Cardiac septum (tissue), 1 donor: ENCODE measurements at regions of chr17 and their contacts with region 1.

Region 1: GRCh38 chr17:72120642-72121163 is at the start of gene SOX9:
- DNase-seq: peak; percentile 93
- total RNA-seq, gene SOX9: 24.0 TPM

Region 2: GRCh38 chr17:71959154-71959553 is 161.5 kb before region 1 on chr17:
- intact Hi-C with region 1: loop called (anchors 5 kb)
- DNase-seq: no peak

Region 3: DNA sequence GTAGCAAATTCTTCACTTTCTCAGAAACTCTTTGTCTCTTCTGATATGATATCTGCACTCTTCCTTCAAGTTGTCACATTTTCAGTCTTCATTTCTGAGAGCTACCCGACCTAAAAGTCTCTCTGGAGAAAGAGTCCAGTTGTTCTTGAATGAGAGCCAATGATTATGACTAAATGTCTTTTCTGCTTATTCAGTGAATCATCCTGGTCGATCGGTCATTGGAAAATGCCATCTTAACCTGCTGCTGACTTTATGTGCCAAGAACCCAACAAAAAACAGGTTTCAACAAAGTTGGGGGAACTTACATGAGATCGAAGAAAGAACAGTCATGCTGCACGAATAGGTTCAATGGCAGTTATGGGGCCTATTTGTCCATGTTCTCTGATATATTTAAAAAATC is 16.0 kb after region 1 on chr17:
- intact Hi-C with region 1: no loop called
- DNase-seq: no peak

Region 4: GRCh38 chr17:72297326-72298115 is 176.8 kb after region 1 on chr17:
- intact Hi-C with region 1: loop called (anchors 5 kb)
- DNase-seq: no peak

Region 5: DNA sequence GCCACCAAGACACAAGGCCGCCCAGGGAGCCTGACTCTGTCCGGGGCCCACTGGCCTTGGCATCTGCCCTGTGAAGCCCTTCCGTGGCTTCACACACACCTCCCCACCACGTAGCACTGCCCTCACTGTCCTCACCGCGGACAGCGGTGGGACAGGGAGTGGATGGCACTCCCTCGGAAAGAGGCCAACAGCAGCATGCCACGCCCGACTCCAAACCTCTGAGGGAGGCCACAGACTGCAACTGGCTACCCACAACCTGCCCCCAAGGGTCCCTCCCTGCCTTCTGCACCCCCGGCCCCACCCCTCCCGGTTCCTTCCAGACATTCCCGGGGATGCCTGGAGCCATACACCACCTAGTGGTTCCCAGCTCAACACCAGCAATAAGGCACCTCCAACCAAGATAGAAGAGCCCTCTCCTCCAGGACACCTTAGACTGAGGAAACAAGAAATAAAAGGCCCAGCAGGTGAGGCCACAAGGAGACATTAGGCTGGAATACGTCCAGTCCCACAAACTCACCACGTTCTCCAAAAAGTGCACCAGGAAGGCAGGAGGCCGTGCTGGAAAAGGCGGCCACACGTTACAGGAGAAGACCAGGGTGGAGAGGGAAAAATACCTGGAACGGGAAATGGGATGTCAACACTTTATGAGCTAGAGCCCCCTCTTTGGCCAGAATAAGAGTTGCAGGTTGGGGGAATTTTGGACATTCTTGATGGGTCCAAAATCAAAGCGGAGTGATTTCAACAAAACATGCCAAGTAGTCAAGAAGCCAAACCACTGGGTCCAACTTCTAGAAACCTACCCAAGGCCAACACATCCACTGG is 310.1 kb after region 1 on chr17:
- intact Hi-C with region 1: loop called (anchors 10 kb)
- DNase-seq: no peak

Region 6: DNA sequence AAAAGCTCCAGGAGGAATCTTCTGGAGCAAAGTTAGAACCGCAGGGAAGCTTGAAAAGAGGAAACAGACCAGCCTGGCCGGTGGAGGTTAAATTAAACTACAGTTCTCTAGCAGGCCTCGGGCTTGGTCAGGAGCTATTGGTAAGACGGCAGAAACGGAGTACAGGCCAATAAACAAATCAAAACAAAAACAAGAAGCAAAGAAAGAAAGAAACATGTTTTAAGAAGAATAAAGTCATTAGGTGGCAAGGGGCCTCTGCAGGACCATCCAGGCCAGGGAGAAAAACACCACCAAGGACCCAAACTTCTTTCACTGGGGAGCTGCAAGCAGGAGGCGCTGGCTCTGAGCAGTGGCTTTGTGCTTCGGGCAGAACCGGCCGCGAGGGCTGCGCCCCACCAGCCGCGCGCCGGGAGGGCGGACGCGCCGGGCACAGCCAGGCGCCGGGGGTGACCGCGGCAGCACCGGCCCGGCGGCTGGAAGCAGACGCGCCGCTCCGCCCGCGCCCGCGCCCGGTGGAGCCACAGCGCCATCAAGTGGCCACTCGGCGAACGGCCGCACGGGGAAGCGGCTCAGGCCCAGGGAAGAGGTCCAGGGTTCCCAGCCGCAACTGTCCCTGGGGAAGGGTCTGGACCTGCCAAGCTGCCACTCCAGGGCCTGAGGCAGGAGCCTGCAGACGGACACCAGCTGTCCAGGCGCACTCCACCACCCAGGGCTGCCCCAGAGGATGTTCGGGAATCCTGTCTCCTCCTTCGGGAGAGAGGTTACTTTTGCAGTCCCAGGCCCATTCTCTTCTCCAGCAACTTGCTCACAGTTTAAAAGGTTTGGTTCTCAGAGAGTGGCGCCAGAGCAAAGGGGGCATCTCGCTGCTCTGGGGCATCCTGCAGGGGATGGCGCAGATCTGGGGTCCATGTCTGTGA is 419.5 kb after region 1 on chr17:
- intact Hi-C with region 1: loop called (anchors 2 kb)
- DNase-seq: peak; percentile 84